GM12878 (cell line): ENCODE measurements at regions of chr15 and their contacts with region 1.

Region 1: DNA sequence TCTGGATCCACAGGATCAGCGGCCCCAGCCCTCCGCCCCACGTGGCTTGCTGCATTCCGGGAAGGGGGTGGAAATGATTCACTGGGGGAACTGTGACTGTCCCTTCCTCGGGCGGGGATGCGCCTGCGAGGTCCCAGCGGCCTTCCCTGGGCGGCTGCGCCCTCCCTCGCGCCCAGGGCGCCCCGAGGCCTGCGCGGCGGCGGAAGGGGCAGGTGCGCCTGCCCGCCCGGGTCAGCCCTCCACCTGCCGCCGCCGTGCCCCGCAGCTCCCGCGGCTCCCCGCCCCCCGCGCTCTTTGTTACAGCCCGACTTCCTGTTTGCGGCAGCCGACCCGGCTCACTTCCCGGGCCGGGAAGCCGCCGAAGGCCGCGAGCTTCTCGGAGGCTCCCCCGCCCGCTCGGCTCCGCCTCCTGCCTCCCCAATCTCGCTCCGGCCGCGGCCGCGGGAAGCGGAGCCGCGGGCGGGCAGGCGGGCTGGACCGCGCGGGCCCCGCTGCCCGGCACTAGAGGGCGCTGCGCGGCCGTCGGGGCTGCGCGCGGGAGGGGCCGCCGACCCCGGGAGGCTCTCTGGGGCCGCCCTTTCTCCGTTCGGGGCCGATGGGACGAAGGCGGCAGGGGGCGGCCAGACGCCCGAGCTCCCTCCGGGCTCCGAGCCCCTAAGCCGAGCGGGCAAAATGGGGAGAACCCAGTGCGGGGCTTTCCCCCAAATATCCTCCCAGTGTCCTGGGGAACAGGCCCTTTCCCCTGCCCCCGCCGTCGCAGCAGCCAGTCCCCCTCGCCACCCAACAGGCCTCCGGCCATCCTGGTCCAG is 11.5 kb upstream of the CHAC1 start:
- DNase-seq: no peak
- ATAC-seq: peak; percentile 82
- H3K4me3 ChIP-seq: peak overlapping the region; percentile 73
- H3K27ac ChIP-seq: peak overlapping the region; percentile 81
- H3K4me1 ChIP-seq: peaks cover 23% of the 10 kb centered on the region
- H3K27me3 ChIP-seq: no peaks in the 10 kb centered on the region
- CTCF ChIP-seq: peak; percentile 29 to 69 (median 43); a peak in 4 of 6 replicates
- EP300 ChIP-seq: no peak
- POLR2A ChIP-seq: peak; percentile 75
- RAD21 ChIP-seq: peak; percentile 58

Region 2: DNA sequence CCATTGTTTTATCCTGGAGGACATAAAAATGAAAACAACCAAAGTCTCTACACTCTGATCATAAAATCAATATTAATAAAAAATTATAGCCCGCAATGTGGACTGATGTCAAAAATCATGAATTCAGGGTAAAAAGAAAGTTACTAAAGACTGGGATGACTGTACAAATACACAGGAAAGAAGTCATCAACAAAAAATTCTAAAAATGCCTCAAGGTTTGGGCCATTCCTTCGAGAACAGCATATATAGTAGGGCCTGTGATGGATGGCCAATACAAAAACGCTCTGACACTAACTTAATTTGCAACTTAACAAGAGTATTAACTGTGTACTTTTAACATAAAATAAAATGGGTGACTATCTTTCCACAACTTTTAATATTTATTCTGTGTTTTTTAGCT is 1284.0 kb before region 1 on chr15:
- CTCF ChIA-PET with region 1: no interaction called
- POLR2A ChIA-PET with region 1: no interaction called
- RAD21 ChIA-PET with region 1: no interaction called
- SMC1A ChIA-PET with region 1: no interaction called
- in situ Hi-C with region 1: no loop called
- intact Hi-C with region 1: no loop called
- DNase-seq: no peak
- ATAC-seq: no peak
- H3K4me3 ChIP-seq: no peak overlapping the region
- H3K27ac ChIP-seq: no peak overlapping the region
- H3K4me1 ChIP-seq: no peaks in the 10 kb centered on the region
- H3K27me3 ChIP-seq: no peaks in the 10 kb centered on the region
- CTCF ChIP-seq: no peak
- EP300 ChIP-seq: no peak
- POLR2A ChIP-seq: no peak
- RAD21 ChIP-seq: no peak

Region 3: DNA sequence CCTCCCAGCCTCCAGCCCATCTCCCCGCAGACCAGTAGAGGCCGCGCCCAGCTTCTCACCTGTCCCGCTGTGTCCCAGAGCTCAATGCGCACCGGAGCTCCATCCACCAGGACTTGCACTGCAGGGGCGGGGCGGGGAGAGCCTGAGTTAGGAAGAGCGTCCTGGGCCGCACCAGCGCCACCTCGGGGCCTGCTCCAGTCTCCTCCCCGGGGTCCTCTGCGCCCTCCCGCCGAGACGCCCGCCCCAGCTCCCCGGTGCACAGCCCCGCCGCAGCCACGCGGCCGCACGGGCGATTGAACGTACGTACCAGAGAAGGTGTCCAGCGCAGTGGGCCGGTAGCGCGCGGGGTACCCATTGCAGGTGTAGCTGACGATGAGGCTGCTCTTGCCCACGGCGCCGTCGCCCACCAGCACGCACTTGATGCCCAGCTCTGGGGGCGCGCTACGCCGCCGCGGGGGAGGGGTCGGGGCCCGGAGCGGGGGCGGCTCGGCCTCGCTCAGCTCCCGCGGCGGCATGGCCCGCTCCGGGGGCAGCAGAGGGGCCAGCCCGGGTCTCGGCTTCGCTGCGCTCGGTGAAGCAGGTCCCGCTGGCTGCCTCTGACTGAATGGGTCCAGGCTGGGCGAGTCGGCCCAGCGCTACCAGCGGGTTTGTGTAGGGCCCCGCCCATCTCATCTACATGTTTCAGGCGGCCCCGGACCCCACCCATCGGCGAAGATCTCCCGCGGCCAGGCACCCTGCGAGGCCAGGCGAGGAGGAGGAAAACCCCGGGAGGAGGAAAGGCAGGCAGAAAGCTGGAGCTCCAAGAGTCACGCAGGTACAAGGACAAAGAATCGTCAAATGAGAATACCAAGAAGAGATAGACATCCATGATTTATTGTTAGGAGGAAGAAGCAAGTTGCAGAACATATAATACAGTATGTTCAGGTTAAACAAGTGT is 67.8 kb before region 1 on chr15 and contains the start of gene RHOV:
- CTCF ChIA-PET with region 1: interaction called, 19 read pairs
- POLR2A ChIA-PET with region 1: interaction called, 10 read pairs
- RAD21 ChIA-PET with region 1: interaction called, 18 read pairs
- SMC1A ChIA-PET with region 1: interaction called, 6 read pairs
- in situ Hi-C with region 1: no loop called
- intact Hi-C with region 1: no loop called
- DNase-seq: no peak
- ATAC-seq: peak; percentile 80
- H3K4me3 ChIP-seq: peak within 1 kb of the TSS; percentile 65
- H3K27ac ChIP-seq: peak within 1 kb of the TSS; percentile 78
- H3K4me1 ChIP-seq: peaks cover 37% of the 10 kb centered on the region
- H3K27me3 ChIP-seq: no peaks in the 10 kb centered on the region
- CTCF ChIP-seq: peak; percentile 44 to 63 (median 55); a peak in 5 of 6 replicates
- EP300 ChIP-seq: no peak
- POLR2A ChIP-seq: peak; percentile 90
- RAD21 ChIP-seq: peak; percentile 32; the same call in 1 of the 2 replicates
- polyA plus RNA-seq, gene RHOV: 0.24 to 1.3 TPM

Region 4: DNA sequence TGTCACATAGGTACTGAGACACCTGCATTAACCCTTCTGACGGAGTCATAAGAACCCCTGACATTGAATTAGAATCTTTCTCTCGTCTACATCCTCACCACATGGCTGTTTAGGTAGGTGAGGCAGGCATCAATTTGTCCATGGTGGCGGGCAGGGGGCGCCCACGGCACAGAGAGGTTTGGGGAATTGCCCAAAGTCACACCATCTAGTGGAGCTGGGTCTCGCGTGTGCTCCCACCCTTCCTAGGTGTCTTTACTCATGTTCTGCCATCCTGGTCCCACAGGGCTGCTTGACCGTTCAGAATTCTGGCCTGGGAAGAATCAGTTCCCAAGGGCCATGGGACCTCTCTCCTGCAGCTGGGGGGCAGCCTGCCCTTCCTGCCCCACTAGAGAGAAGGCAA is 27.2 kb before region 1 on chr15:
- CTCF ChIA-PET with region 1: interaction called, 30 read pairs
- POLR2A ChIA-PET with region 1: no interaction called
- RAD21 ChIA-PET with region 1: interaction called, 3 read pairs
- SMC1A ChIA-PET with region 1: interaction called, 5 read pairs
- in situ Hi-C with region 1: no loop called
- intact Hi-C with region 1: loop called (anchors 5 kb)
- DNase-seq: no peak
- ATAC-seq: peak; percentile 73
- H3K4me3 ChIP-seq: no peak overlapping the region
- H3K27ac ChIP-seq: no peak overlapping the region
- H3K4me1 ChIP-seq: peaks cover 9% of the 10 kb centered on the region
- H3K27me3 ChIP-seq: no peaks in the 10 kb centered on the region; a peak in 1 of 4 replicates
- CTCF ChIP-seq: peak; percentile 39 to 53 (median 49); a peak in 4 of 6 replicates
- EP300 ChIP-seq: no peak
- POLR2A ChIP-seq: no peak
- RAD21 ChIP-seq: peak; percentile 24; the same call in 1 of the 2 replicates

Region 5: DNA sequence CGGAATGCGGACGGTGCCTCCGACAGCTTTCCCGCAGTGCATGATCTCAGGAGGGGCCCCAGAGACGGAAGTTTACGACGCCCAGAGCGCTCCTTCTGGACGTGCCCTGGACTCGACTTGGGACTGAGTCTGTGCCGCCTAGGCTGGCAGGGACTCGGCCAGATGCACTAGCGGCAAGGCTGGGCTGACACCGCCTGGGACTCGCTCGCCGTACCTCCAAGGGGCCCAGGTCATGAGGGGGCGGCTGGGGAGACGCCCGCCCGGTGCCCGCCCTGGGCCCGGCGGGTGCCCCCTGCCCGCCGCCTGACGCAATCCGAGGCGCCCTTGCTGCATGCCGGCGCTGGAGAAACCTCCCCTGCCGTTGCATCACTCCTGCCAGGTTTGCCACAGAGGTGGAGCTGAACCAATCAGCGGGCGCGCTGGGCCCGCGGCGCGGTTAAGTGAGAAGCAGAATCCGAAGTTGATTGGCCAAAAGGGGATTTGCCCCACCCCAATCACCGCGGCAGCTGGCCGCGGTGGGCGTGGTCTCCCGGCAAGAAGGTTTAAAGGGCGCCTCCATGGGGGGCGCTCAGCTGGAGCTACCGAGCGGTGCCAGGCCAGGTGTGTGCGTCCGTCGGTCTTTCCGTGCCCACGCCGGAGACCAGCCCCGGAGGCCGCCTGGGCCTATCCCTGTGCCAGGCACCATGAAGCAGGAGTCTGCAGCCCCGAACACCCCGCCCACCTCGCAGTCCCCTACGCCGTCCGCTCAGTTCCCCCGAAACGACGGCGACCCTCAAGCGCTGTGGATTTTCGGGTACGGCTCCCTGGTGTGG is 11.4 kb after region 1 on chr15 and contains the start of gene CHAC1:
- CTCF ChIA-PET with region 1: interaction called, 37 read pairs
- POLR2A ChIA-PET with region 1: interaction called, 20 read pairs
- RAD21 ChIA-PET with region 1: interaction called, 3 read pairs
- SMC1A ChIA-PET with region 1: interaction called, 5 read pairs
- in situ Hi-C with region 1: no loop called
- intact Hi-C with region 1: no loop called
- DNase-seq: peak; percentile 81
- ATAC-seq: peak; percentile 98
- H3K4me3 ChIP-seq: peak within 1 kb of the TSS; percentile 73
- H3K27ac ChIP-seq: peak within 1 kb of the TSS; percentile 66
- H3K4me1 ChIP-seq: peaks cover 7% of the 10 kb centered on the region
- H3K27me3 ChIP-seq: no peaks in the 10 kb centered on the region
- CTCF ChIP-seq: no peak
- EP300 ChIP-seq: no peak
- POLR2A ChIP-seq: peak; percentile 96
- RAD21 ChIP-seq: no peak
- polyA plus RNA-seq, gene CHAC1: 0.37 to 0.73 TPM

Region 6: DNA sequence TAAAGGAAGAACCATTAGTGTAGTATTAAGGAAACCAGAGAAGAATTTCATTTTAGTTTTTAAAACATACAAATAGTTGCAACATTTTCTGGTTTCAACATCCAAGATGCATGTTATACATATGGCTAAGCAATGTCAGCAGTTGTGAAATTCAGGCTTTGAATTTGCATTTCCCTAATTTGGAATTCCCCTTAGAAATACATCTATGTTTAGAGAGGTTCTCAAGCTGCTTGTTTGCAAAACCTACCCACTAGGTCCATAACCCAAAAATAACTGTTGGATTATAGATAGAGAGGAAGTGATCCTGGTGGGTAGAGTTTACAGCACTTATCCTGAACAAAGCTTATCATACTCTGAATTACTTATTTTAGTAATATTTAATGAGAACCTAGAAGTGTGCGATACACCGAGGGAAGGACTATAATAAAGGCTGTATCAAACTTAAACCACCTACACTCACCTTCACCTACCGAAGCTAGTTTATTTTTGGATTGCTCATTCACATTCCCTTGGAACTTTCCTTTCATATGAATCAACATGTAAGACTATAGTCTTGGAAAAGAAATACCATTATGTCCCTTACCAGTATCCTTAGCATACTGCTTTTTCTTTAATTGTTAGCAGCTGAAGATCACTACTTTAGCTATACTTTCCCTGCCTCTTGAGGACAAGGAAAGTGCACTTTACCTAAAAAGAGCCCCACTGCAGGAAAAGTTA is 72.1 kb after region 1 on chr15:
- CTCF ChIA-PET with region 1: interaction called, 16 read pairs
- POLR2A ChIA-PET with region 1: no interaction called
- RAD21 ChIA-PET with region 1: interaction called, 14 read pairs
- SMC1A ChIA-PET with region 1: interaction called, 16 read pairs
- in situ Hi-C with region 1: no loop called
- intact Hi-C with region 1: no loop called
- DNase-seq: peak; percentile 50
- ATAC-seq: peak; percentile 85
- H3K4me3 ChIP-seq: no peak overlapping the region
- H3K27ac ChIP-seq: peak overlapping the region; percentile 85
- H3K4me1 ChIP-seq: peaks cover 21% of the 10 kb centered on the region
- H3K27me3 ChIP-seq: no peaks in the 10 kb centered on the region
- CTCF ChIP-seq: no peak
- EP300 ChIP-seq: no peak
- POLR2A ChIP-seq: no peak
- RAD21 ChIP-seq: no peak

Region 7: GRCh38 chr15:41180206-41180789 is 238.6 kb after region 1 on chr15:
- CTCF ChIA-PET with region 1: interaction called, 12 read pairs
- POLR2A ChIA-PET with region 1: no interaction called
- RAD21 ChIA-PET with region 1: interaction called, 3 read pairs
- SMC1A ChIA-PET with region 1: interaction called, 6 read pairs
- in situ Hi-C with region 1: no loop called
- intact Hi-C with region 1: no loop called
- DNase-seq: no peak
- ATAC-seq: no peak
- H3K4me3 ChIP-seq: no peak overlapping the region
- H3K27ac ChIP-seq: no peak overlapping the region
- H3K4me1 ChIP-seq: no peaks in the 10 kb centered on the region
- H3K27me3 ChIP-seq: no peaks in the 10 kb centered on the region; a peak in 1 of 4 replicates
- CTCF ChIP-seq: no peak
- EP300 ChIP-seq: no peak
- POLR2A ChIP-seq: no peak
- RAD21 ChIP-seq: no peak

Region 8: GRCh38 chr15:41269887-41270286 is 328.2 kb after region 1 on chr15:
- CTCF ChIA-PET with region 1: no interaction called
- POLR2A ChIA-PET with region 1: no interaction called
- RAD21 ChIA-PET with region 1: no interaction called
- SMC1A ChIA-PET with region 1: no interaction called
- in situ Hi-C with region 1: no loop called
- intact Hi-C with region 1: no loop called
- DNase-seq: no peak
- ATAC-seq: no peak
- H3K4me3 ChIP-seq: no peak overlapping the region
- H3K27ac ChIP-seq: no peak overlapping the region
- H3K4me1 ChIP-seq: no peaks in the 10 kb centered on the region
- H3K27me3 ChIP-seq: no peaks in the 10 kb centered on the region
- CTCF ChIP-seq: no peak
- EP300 ChIP-seq: no peak
- POLR2A ChIP-seq: no peak
- RAD21 ChIP-seq: no peak

Region 9: GRCh38 chr15:41304149-41304770 is 362.5 kb after region 1 on chr15:
- CTCF ChIA-PET with region 1: no interaction called
- POLR2A ChIA-PET with region 1: no interaction called
- RAD21 ChIA-PET with region 1: no interaction called
- SMC1A ChIA-PET with region 1: no interaction called
- in situ Hi-C with region 1: no loop called
- intact Hi-C with region 1: no loop called
- DNase-seq: no peak
- ATAC-seq: peak; percentile 55; the same call in 2 of the 3 replicates
- H3K4me3 ChIP-seq: no peak overlapping the region
- H3K27ac ChIP-seq: no peak overlapping the region; the same call in 1 of the 2 replicates
- H3K4me1 ChIP-seq: peaks cover 10% of the 10 kb centered on the region
- H3K27me3 ChIP-seq: no peaks in the 10 kb centered on the region
- CTCF ChIP-seq: no peak
- EP300 ChIP-seq: no peak
- POLR2A ChIP-seq: no peak
- RAD21 ChIP-seq: no peak

Region 10: DNA sequence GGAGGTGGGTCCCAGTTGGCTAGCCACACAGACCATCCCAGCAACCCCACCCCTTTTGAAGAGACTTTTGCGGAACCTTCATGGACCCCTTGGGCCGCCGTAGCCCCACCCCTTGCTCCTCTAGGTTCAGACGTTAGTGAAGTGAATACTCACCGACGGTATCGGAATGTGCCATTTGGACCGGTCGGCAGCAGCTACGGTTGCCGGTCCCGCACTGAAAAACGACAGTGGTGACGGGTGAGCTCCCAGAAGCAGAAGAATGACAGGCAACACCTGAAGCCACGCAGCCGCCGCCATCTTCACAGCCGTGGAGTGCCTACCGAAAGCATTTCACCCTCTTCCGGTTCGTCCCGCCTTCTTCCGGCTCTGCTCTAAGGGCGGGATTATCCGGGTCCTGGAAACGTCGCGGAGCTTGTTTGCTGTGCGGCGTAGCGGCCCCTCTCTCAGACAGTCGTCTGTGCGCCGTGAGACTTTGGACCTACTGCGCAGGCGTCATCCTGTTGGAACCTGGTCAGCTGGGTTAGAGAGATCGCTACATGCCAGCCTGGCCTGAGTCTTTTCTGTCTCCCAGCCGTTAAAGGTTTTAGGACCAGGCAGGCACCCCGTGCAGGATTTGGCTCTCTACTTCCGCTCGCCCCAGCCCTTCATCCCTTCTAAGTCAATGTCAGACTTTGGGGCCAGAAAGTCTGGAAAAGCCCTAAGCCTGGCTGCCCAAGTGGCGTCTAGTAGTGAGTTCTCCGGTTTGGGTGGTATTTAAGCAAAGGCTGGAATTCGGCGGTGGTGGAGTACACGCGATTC is 1331.6 kb after region 1 on chr15 and contains the starts of genes GANC and TMEM87A:
- CTCF ChIA-PET with region 1: no interaction called
- POLR2A ChIA-PET with region 1: no interaction called
- RAD21 ChIA-PET with region 1: no interaction called
- SMC1A ChIA-PET with region 1: no interaction called
- in situ Hi-C with region 1: no loop called
- intact Hi-C with region 1: no loop called
- DNase-seq: peak; percentile 95
- ATAC-seq: peak; percentile 95
- H3K4me3 ChIP-seq: peak within 1 kb of the TSS; percentile 85
- H3K27ac ChIP-seq: peak within 1 kb of the TSS; percentile 95
- H3K4me1 ChIP-seq: no peaks in the 10 kb centered on the region; the same call in 1 of the 2 replicates
- H3K27me3 ChIP-seq: no peaks in the 10 kb centered on the region
- CTCF ChIP-seq: no peak
- EP300 ChIP-seq: no peak
- POLR2A ChIP-seq: peak; percentile 99
- RAD21 ChIP-seq: no peak
- polyA plus RNA-seq, gene GANC: 11.3 to 13.1 TPM
- polyA plus RNA-seq, gene TMEM87A: 33.4 to 53.2 TPM